GM12878 (cell line): ENCODE measurements at regions of chr5 and their contacts with region 1.

Region 1: DNA sequence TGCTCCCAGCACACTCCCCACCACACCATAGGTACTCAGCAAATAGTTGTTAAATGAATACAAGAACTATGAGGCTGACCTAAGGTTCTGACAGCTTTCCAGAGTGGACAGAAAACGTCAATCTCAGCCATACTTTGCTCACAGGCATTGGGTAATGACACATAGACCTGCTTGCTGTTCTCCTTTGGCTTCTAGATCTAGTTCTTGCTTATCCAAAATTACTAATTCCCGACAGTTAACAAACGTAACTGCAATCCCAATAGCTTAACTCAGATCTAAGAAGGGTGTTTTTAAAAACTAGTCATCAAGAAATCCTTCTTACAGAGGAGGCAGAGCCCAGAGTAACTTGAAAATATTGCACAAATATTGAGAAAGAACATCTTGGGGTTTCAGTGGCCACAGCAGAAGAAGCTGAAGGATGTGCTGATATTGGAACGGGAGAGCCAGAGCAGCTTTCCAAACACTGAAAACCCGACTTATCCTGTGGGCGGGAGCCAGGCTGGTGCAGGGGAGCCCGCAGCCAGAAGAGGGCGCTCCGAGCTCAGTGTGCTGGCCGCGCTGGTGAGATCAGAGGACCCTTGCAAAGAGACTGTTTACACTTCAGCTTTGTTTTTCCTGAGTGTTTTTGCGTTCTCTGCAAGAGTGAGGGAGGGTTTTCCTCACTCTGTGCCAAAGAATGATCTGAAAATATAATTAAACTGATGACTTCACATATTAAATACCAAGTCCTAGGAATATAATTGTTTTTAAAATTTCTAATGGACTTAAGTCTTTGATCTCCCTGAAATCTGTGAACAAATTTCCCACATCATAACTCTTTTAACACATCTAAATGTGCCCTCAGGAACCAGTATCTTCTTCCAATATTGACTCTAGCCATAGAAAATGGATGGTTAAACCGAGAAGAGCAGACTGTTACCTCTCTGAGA is 30.3 kb downstream of the FGF1 start:
- DNase-seq: no peak
- ATAC-seq: peak; percentile 98
- H3K4me3 ChIP-seq: no peak overlapping the region
- H3K27ac ChIP-seq: no peak overlapping the region
- H3K4me1 ChIP-seq: no peaks in the 10 kb centered on the region
- H3K27me3 ChIP-seq: peaks cover 0 to 1% of the 10 kb centered on the region in 2 experiments; a peak in 2 of 4 replicates
- CTCF ChIP-seq: peak; percentile 86 to 96 (median 94)
- EP300 ChIP-seq: no peak
- POLR2A ChIP-seq: no peak
- RAD21 ChIP-seq: peak; percentile 78

Region 2: GRCh38 chr5:142520886-142521285 is 134.7 kb before region 1 on chr5:
- CTCF ChIA-PET with region 1: no interaction called
- POLR2A ChIA-PET with region 1: no interaction called
- RAD21 ChIA-PET with region 1: no interaction called
- SMC1A ChIA-PET with region 1: no interaction called
- in situ Hi-C with region 1: no loop called
- intact Hi-C with region 1: no loop called
- DNase-seq: no peak
- ATAC-seq: no peak
- H3K4me3 ChIP-seq: no peak overlapping the region
- H3K27ac ChIP-seq: no peak overlapping the region
- H3K4me1 ChIP-seq: no peaks in the 10 kb centered on the region
- H3K27me3 ChIP-seq: no peaks in the 10 kb centered on the region
- CTCF ChIP-seq: no peak
- EP300 ChIP-seq: no peak
- POLR2A ChIP-seq: no peak
- RAD21 ChIP-seq: no peak

Region 3: GRCh38 chr5:142568283-142568995 is 87.2 kb before region 1 on chr5:
- CTCF ChIA-PET with region 1: no interaction called
- POLR2A ChIA-PET with region 1: no interaction called
- RAD21 ChIA-PET with region 1: no interaction called
- SMC1A ChIA-PET with region 1: no interaction called
- in situ Hi-C with region 1: no loop called
- intact Hi-C with region 1: no loop called
- DNase-seq: no peak
- ATAC-seq: no peak
- H3K4me3 ChIP-seq: no peak overlapping the region
- H3K27ac ChIP-seq: no peak overlapping the region
- H3K4me1 ChIP-seq: no peaks in the 10 kb centered on the region
- H3K27me3 ChIP-seq: no peaks in the 10 kb centered on the region; a peak in 1 of 4 replicates
- CTCF ChIP-seq: no peak
- EP300 ChIP-seq: no peak
- POLR2A ChIP-seq: no peak
- RAD21 ChIP-seq: no peak

Region 4: DNA sequence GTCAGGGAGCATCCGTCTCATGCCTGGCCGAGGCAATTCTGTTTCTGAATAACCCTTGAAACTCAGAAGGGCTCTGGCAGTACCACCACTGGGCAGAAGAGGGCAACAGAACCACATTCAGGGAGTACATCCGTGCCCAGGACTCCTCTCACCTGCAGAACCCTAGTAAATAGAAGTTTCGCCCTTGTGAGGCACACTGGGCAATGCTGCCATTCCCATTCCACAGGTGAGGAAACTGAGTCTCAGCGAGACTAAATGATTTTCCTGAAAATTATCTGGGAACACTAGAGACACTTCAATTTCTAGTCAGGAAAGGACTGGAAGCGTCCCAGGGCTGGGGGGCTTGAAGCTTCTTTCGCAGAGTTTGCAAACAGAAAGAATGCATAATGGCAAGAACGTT is 44.4 kb before region 1 on chr5:
- CTCF ChIA-PET with region 1: interaction called, 4 read pairs
- POLR2A ChIA-PET with region 1: no interaction called
- RAD21 ChIA-PET with region 1: no interaction called
- SMC1A ChIA-PET with region 1: no interaction called
- in situ Hi-C with region 1: no loop called
- intact Hi-C with region 1: loop called (anchors 5 kb)
- DNase-seq: no peak
- ATAC-seq: peak; percentile 97
- H3K4me3 ChIP-seq: no peak overlapping the region
- H3K27ac ChIP-seq: no peak overlapping the region
- H3K4me1 ChIP-seq: no peaks in the 10 kb centered on the region
- H3K27me3 ChIP-seq: no peaks in the 10 kb centered on the region; a peak in 4 of 4 replicates
- CTCF ChIP-seq: peak; percentile 68 to 94 (median 71)
- EP300 ChIP-seq: no peak
- POLR2A ChIP-seq: no peak
- RAD21 ChIP-seq: peak; percentile 78

Region 5: GRCh38 chr5:142644640-142645361 is 10.8 kb before region 1 on chr5:
- CTCF ChIA-PET with region 1: interaction called, 20 read pairs
- POLR2A ChIA-PET with region 1: no interaction called
- RAD21 ChIA-PET with region 1: no interaction called
- SMC1A ChIA-PET with region 1: interaction called, 3 read pairs
- in situ Hi-C with region 1: no loop called
- intact Hi-C with region 1: no loop called
- DNase-seq: no peak
- ATAC-seq: no peak
- H3K4me3 ChIP-seq: no peak overlapping the region
- H3K27ac ChIP-seq: no peak overlapping the region
- H3K4me1 ChIP-seq: no peaks in the 10 kb centered on the region
- H3K27me3 ChIP-seq: peaks cover 3 to 4% of the 10 kb centered on the region in 2 experiments; a peak in 3 of 4 replicates
- CTCF ChIP-seq: no peak
- EP300 ChIP-seq: no peak
- POLR2A ChIP-seq: no peak
- RAD21 ChIP-seq: no peak